ENCODE measurements at regions of chr7 and their contacts with region 1.

Region 1: DNA sequence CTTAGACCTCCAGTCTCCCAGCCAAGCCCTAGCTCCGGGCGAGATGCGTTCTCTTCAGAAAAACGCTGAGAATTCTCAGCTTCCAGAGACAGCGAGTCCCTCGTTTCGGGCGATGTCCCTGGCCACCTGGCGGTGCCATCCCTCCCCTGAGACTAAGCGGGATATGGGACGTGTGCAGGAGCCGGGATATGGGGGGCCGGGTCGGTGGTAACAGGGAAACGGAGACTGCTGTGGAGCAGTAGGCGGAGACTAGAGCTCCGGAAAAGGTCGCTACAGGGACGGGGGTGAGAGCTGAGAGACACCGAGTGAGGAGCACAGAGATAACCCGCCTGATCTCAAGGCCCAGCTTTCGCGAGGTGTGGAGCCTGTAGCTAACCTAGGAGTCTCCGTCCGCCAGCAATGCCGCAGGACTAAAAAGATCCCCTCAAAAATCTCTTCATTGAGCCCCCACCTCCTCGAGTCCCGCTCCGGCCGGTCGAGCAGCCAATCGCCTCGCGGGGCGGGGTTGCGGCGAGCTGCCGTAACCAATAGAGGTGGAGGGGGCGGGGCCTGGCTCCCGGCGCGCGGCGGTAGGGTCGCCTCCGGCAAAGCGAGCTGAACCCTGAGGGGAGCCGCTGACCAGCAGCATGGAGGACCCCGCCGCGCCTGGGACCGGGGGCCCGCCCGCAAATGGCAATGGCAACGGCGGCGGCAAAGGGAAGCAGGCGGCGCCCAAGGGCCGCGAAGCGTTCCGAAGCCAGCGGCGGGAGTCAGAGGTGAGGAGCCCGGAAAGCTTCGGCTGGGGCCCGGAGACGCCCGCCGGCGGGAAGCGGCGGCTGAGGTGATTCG is at the start of gene STRIP2:
- DNase-seq: peak; percentile 67
- ATAC-seq: peak; percentile 98
- H3K4me3 ChIP-seq: peak within 1 kb of the TSS; percentile 69
- H3K27ac ChIP-seq: no peak within 1 kb of the TSS; the same call in 1 of the 2 replicates
- H3K4me1 ChIP-seq: peaks cover 2% of the 10 kb centered on the region; the same call in 1 of the 2 replicates
- H3K27me3 ChIP-seq: peaks cover 8% of the 10 kb centered on the region
- CTCF ChIP-seq: no peak
- POLR2A ChIP-seq: no peak
- RAD21 ChIP-seq: no peak
- total RNA-seq, gene STRIP2: 2.2 and 3.0 TPM in 2 replicates

Region 2: GRCh38 chr7:129389829-129390228 is 44.2 kb before region 1 on chr7:
- CTCF ChIA-PET with region 1: no interaction called
- POLR2A ChIA-PET with region 1: no interaction called
- dilution Hi-C with region 1: no loop called
- in situ Hi-C with region 1: no loop called
- intact Hi-C with region 1: loop called (anchors 5 kb)
- DNase-seq: no peak
- ATAC-seq: no peak
- H3K4me3 ChIP-seq: no peak overlapping the region
- H3K27ac ChIP-seq: no peak overlapping the region
- H3K4me1 ChIP-seq: peaks cover 2% of the 10 kb centered on the region; the same call in 1 of the 2 replicates
- H3K27me3 ChIP-seq: no peaks in the 10 kb centered on the region
- CTCF ChIP-seq: no peak
- POLR2A ChIP-seq: no peak
- RAD21 ChIP-seq: no peak

Region 3: DNA sequence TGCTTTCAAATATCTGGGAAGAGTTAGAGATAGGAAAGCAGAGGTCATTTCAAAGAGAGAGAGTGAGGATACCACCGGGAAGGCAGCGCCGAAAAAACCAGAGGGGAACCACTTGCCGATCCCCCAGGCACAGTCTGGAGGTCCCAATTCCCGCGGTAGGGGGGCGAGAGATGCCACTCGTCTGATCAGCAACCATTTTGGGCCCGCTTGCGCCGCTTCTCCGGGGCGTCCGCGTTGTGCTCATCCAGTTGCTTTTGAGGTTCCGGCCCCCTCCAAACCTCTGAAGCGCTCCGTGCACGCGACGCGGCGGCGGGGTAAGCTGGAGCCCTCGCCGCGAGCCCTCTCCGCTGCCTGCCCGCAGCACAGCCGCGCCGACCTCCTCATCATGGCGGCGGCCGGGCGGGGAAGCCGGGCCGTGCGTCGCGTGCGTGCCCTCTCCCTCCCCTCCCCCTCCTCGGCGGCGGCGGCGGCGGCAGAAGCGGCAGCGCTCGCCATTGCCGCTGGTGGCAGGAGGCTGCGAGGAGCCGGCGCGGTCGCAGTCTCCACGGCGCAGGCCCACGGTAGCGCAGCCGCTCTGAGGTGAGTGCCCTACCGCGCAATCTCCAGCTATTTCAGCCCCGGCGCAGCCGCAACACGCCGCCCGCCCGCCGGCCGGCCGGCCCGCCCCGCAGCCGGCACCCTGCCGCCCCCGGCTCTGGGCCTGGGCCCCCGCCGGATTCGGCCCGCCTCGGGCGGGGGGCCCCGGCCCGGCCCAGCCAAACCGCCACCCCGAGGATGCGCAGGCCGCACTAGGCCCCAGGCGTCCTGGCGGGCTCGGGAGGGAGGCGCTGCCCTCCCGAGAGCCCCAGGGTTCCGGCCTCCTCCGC is 177.4 kb after region 1 on chr7 and contains the start of gene NRF1:
- CTCF ChIA-PET with region 1: no interaction called
- POLR2A ChIA-PET with region 1: no interaction called
- dilution Hi-C with region 1: no loop called
- in situ Hi-C with region 1: no loop called
- intact Hi-C with region 1: no loop called
- DNase-seq: peak; percentile 89
- ATAC-seq: peak; percentile 94
- H3K4me3 ChIP-seq: peak within 1 kb of the TSS; percentile 93
- H3K27ac ChIP-seq: peak within 1 kb of the TSS; percentile 97
- H3K4me1 ChIP-seq: peaks cover 2% of the 10 kb centered on the region
- H3K27me3 ChIP-seq: no peaks in the 10 kb centered on the region
- CTCF ChIP-seq: peak; percentile 25; the same call in 1 of the 2 replicates
- POLR2A ChIP-seq: peak; percentile 87
- RAD21 ChIP-seq: no peak
- total RNA-seq, gene NRF1: 12.2 and 15.8 TPM in 2 replicates

Region 4: GRCh38 chr7:129959471-129960203 is 525.6 kb after region 1 on chr7:
- CTCF ChIA-PET with region 1: no interaction called
- POLR2A ChIA-PET with region 1: no interaction called
- dilution Hi-C with region 1: no loop called
- in situ Hi-C with region 1: no loop called
- intact Hi-C with region 1: no loop called
- DNase-seq: no peak
- ATAC-seq: no peak
- H3K4me3 ChIP-seq: no peak overlapping the region
- H3K27ac ChIP-seq: peak overlapping the region; percentile 58; the same call in 1 of the 2 replicates
- H3K4me1 ChIP-seq: peaks cover 15% of the 10 kb centered on the region
- H3K27me3 ChIP-seq: no peaks in the 10 kb centered on the region
- CTCF ChIP-seq: no peak
- POLR2A ChIP-seq: no peak
- RAD21 ChIP-seq: no peak